Heart right ventricle (tissue), 16 donors: ENCODE measurements at regions of chr17 and their contacts with region 1.

Region 1: GRCh38 chr17:14701886-14702285 is 401.0 kb downstream of the HS3ST3B1 start:
- DNase-seq: no peak
- ATAC-seq: no peak
- H3K4me3 ChIP-seq: no peak overlapping the region
- H3K27ac ChIP-seq: no peak overlapping the region
- H3K4me1 ChIP-seq: no peaks in the 10 kb centered on the region
- H3K27me3 ChIP-seq: no peaks in the 10 kb centered on the region
- CTCF ChIP-seq: no peak

Region 2: DNA sequence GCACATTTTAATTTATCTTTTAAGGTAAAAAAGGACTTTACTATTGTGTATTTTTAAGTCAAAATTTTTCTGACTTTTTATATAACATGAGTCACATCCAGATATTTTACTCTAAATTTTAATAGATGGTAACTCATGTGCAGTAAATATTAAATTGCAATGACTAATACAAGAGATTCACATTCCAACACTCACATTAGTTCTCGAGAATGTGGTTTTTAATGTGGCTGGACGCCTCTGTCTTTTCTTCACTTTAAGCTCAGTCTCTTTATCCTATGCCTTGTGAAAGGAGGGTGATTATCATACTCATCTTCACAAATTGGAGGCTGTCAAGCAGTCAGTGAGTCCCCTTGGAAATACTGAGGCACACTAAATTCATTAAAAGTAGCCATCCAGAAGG is 85.4 kb before region 1 on chr17:
- intact Hi-C with region 1: no loop called
- DNase-seq: no peak
- ATAC-seq: no peak
- H3K4me3 ChIP-seq: no peak overlapping the region
- H3K27ac ChIP-seq: no peak overlapping the region
- H3K4me1 ChIP-seq: no peaks in the 10 kb centered on the region
- H3K27me3 ChIP-seq: peaks cover 0 to 5% (median 0%) of the 10 kb centered on the region in 7 donors
- CTCF ChIP-seq: no peak

Region 3: GRCh38 chr17:14672830-14673229 is 29.1 kb before region 1 on chr17:
- intact Hi-C with region 1: loop called in 1 of 10 experiments (anchors 1 kb)
- DNase-seq: no peak
- ATAC-seq: no peak
- H3K4me3 ChIP-seq: no peak overlapping the region
- H3K27ac ChIP-seq: no peak overlapping the region
- H3K4me1 ChIP-seq: peaks cover 0 to 12% (median 0%) of the 10 kb centered on the region in 9 donors
- H3K27me3 ChIP-seq: peaks cover 0 to 13% (median 0%) of the 10 kb centered on the region in 7 donors
- CTCF ChIP-seq: no peak